ENCODE measurements at regions of chr20 and their contacts with region 1.

Region 1: GRCh38 chr20:31723319-31724078 is 831 bp upstream of the BCL2L1 start:
- DNase-seq: peak; percentile 100
- H3K4me3 ChIP-seq: peak overlapping the region; percentile 75
- H3K4me3 Mint-ChIP-seq: peak overlapping the region; percentile 96
- H3K27ac Mint-ChIP-seq: peak overlapping the region; percentile 97
- H3K4me1 ChIP-seq: peaks cover 12% of the 10 kb centered on the region
- H3K4me1 Mint-ChIP-seq: peaks cover 19% of the 10 kb centered on the region
- H3K27me3 ChIP-seq: no peaks in the 10 kb centered on the region
- H3K27me3 Mint-ChIP-seq: no peaks in the 10 kb centered on the region
- CTCF ChIP-seq: peak; percentile 99 to 100

Region 2: GRCh38 chr20:31514159-31515071 is 209.1 kb before region 1 on chr20 and contains the start of gene HM13:
- CTCF ChIA-PET with region 1: interaction called, 11 read pairs
- POLR2A ChIA-PET with region 1: no interaction called
- intact Hi-C with region 1: no loop called
- DNase-seq: peak; percentile 97 to 98
- H3K4me3 ChIP-seq: peak within 1 kb of the TSS; percentile 74
- H3K4me3 Mint-ChIP-seq: no peak within 1 kb of the TSS
- H3K27ac Mint-ChIP-seq: no peak within 1 kb of the TSS
- H3K4me1 ChIP-seq: peaks cover 22% of the 10 kb centered on the region
- H3K4me1 Mint-ChIP-seq: no peaks in the 10 kb centered on the region
- H3K27me3 ChIP-seq: no peaks in the 10 kb centered on the region
- H3K27me3 Mint-ChIP-seq: no peaks in the 10 kb centered on the region
- CTCF ChIP-seq: peak; percentile 98 to 100
- total RNA-seq, gene HM13: 435 and 443 TPM in 2 replicates

Region 3: DNA sequence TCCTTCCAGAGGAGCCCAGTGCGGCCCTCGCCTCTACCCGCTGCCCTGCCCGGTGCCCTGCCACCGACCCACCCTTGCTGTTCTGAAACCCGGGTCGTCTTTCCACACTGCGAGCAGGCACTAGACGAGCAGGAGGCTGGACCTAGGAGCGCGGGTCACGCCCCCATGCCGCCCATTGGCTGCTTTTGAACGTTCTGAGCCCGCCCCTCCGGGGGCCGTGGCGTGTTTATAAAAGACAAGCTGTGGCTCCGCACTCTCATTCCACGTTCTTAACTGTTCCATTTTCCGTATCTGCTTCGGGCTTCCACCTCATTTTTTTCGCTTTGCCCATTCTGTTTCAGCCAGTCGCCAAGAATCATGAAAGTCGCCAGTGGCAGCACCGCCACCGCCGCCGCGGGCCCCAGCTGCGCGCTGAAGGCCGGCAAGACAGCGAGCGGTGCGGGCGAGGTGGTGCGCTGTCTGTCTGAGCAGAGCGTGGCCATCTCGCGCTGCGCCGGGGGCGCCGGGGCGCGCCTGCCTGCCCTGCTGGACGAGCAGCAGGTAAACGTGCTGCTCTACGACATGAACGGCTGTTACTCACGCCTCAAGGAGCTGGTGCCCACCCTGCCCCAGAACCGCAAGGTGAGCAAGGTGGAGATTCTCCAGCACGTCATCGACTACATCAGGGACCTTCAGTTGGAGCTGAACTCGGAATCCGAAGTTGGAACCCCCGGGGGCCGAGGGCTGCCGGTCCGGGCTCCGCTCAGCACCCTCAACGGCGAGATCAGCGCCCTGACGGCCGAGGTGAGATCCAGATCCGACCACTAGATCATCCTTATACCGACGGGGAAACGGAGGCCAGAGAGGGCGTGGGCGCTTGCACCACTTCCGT is 118.2 kb before region 1 on chr20 and contains the start of gene ID1:
- CTCF ChIA-PET with region 1: interaction called, 58 read pairs
- POLR2A ChIA-PET with region 1: interaction called, 73 read pairs
- intact Hi-C with region 1: loop called (anchors 1 kb)
- DNase-seq: peak; percentile 100
- H3K4me3 ChIP-seq: peak within 1 kb of the TSS; percentile 63
- H3K4me3 Mint-ChIP-seq: peak within 1 kb of the TSS; percentile 88
- H3K27ac Mint-ChIP-seq: peak within 1 kb of the TSS; percentile 98
- H3K4me1 ChIP-seq: peaks cover 54% of the 10 kb centered on the region
- H3K4me1 Mint-ChIP-seq: peaks cover 49% of the 10 kb centered on the region
- H3K27me3 ChIP-seq: no peaks in the 10 kb centered on the region
- H3K27me3 Mint-ChIP-seq: no peaks in the 10 kb centered on the region
- CTCF ChIP-seq: no peak
- total RNA-seq, gene ID1: 157 and 163 TPM in 2 replicates

Region 4: DNA sequence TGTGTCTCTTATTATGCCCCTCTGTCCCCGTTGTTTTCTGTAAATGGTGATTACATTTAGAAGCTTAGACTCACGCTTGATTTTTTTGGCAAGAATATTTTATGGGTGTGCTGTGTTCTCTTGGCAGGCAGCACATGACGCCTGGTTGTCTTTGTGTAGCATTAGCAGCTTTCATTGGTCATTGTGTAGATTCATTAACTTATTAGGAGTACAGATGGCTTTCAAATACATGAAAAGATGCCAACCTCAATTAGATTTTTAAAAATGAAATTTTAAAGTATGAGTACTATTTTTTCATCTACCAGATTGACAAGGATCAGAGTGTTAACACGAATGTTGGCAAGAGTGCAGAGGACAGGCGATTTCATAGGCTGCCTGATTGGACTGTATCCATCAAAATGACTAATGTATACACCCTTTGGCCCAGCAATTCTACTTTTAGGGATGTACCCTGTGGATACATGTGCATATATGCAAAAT is 70.5 kb before region 1 on chr20:
- CTCF ChIA-PET with region 1: interaction called, 20 read pairs
- POLR2A ChIA-PET with region 1: interaction called, 9 read pairs
- intact Hi-C with region 1: no loop called
- DNase-seq: no peak
- H3K4me3 ChIP-seq: no peak overlapping the region
- H3K4me3 Mint-ChIP-seq: no peak overlapping the region
- H3K27ac Mint-ChIP-seq: no peak overlapping the region
- H3K4me1 ChIP-seq: no peaks in the 10 kb centered on the region
- H3K4me1 Mint-ChIP-seq: no peaks in the 10 kb centered on the region
- H3K27me3 ChIP-seq: no peaks in the 10 kb centered on the region
- H3K27me3 Mint-ChIP-seq: no peaks in the 10 kb centered on the region
- CTCF ChIP-seq: no peak

Region 5: DNA sequence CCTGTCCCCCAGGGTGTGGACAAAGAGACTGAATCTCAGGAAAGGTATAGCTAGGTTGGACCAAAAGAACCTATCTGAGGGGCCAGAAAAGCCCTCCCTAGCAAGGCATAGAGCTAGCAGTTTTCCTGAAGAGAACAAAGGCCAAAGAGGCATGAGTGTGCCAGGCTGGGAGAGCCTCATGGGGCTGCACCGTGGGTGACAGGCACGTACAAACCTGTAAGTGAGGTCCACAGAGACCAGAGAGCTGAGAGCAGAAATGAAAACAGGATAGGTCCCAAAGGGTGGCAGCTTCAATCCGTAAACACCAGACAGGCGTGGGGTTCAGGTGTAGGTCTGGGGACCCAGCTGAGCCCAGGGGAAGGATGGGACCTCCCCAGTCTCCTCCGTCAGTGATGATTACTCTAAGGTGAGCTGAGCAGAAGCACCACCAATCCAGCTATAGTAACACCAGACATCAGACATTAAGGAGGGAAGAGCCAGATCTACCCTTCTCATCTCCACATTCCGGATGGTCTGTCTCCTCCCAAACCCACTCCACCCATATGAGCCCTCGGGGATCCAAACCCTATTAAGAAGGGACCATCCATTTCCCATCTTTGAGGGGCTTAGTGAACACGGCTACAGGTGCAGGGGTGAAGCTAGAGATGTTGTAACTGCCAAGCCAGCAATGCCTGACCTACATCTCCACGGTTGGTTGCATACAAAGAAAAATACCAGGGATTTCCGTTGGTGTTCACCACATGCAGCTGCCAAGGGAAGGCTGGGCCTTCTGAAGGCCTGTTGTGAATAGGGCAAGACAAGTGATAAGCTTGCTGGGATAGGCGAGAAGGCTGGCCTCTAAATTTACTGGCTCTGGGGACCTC is 39.1 kb before region 1 on chr20:
- CTCF ChIA-PET with region 1: interaction called, 78 read pairs
- POLR2A ChIA-PET with region 1: interaction called, 45 read pairs
- intact Hi-C with region 1: no loop called
- DNase-seq: no peak
- H3K4me3 ChIP-seq: no peak overlapping the region
- H3K4me3 Mint-ChIP-seq: no peak overlapping the region
- H3K27ac Mint-ChIP-seq: peak overlapping the region; percentile 73
- H3K4me1 ChIP-seq: peaks cover 85% of the 10 kb centered on the region
- H3K4me1 Mint-ChIP-seq: peaks cover 86% of the 10 kb centered on the region
- H3K27me3 ChIP-seq: no peaks in the 10 kb centered on the region
- H3K27me3 Mint-ChIP-seq: no peaks in the 10 kb centered on the region
- CTCF ChIP-seq: no peak

Region 6: DNA sequence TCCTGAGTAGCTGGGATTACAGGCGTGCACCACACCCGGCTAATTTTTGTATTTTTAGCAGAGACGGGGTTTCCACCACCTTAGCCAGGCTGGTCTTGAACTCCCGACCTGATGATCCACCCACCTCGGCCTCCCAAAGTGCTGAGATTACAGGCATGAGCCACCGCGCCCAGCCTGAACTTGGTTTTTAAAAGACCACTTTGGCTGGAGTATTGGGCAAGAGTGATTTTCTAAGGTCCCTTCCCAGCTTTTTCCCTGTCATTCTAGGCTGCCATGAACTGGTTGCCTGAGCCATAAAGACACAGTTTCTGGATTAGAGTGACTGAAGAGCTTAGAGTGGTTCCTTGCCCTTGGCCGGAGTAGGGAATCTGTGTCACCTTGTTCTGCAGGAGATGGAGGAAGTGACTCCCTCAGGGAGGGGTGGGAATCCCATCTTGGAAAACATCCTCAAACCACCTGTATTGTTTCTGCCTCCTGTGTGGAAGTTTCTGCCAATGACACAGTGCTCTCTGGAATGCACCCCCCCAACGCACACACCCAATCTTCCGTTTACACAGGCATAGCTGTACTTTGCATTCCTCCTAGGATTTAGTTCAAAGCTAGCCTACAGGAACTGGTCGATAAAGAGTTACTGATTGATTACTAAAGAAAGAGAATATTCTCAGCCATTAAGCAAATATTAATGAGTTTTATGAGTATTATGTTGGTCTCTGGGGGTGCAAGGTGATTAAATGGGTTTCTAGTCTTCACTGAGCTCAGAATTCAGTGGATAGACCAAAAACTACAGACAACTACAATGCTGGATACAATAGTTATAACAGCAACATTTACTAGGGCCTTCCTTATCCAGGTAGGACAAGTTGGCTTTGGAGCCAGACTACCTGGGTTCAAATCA is 19.0 kb before region 1 on chr20:
- CTCF ChIA-PET with region 1: interaction called, 72 read pairs
- POLR2A ChIA-PET with region 1: interaction called, 178 read pairs
- intact Hi-C with region 1: loop called (anchors 1 kb)
- DNase-seq: peak; percentile 99 to 100
- H3K4me3 ChIP-seq: no peak overlapping the region
- H3K4me3 Mint-ChIP-seq: peak overlapping the region; percentile 48
- H3K27ac Mint-ChIP-seq: peak overlapping the region; percentile 98
- H3K4me1 ChIP-seq: peaks cover 93% of the 10 kb centered on the region
- H3K4me1 Mint-ChIP-seq: peaks cover 74% of the 10 kb centered on the region
- H3K27me3 ChIP-seq: no peaks in the 10 kb centered on the region
- H3K27me3 Mint-ChIP-seq: no peaks in the 10 kb centered on the region
- CTCF ChIP-seq: no peak

Region 7: DNA sequence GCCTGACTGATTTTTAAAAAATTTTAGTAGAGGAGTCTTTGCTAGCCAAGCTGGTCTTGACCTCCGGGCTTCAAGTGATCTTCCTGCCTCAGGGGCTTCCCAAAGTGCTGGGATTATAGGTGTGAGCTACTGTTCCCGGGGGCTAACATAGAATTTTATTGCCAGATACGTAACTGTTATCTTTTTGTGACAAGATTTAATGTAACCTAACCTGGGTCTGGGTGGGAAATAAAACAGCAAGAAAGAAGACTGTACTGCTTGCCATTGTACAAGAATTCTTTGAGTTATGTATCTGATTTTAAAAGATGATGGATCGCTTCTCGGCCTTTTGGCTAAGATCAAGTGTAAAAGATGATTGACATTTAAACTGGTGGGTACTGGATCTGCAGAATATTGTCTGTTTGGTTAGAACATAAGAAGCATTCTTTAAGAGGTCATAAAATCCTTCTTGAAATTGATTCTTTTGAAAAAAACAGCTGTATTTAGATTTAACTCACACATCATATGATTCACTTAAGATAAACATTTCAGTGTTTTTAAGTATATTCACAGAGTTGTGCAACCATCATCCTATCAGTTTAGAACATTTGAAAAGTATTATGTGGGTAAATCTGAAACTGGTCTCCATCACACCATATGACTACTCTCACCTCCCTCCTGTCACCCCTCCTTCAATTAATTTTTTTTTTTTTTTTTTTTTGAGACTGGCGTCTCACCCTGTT is 37.2 kb after region 1 on chr20:
- CTCF ChIA-PET with region 1: interaction called, 3 read pairs
- POLR2A ChIA-PET with region 1: interaction called, 11 read pairs
- intact Hi-C with region 1: no loop called
- DNase-seq: no peak
- H3K4me3 ChIP-seq: no peak overlapping the region
- H3K4me3 Mint-ChIP-seq: no peak overlapping the region
- H3K27ac Mint-ChIP-seq: peak overlapping the region; percentile 32
- H3K4me1 ChIP-seq: peaks cover 19% of the 10 kb centered on the region
- H3K4me1 Mint-ChIP-seq: peaks cover 32% of the 10 kb centered on the region
- H3K27me3 ChIP-seq: no peaks in the 10 kb centered on the region
- H3K27me3 Mint-ChIP-seq: no peaks in the 10 kb centered on the region
- CTCF ChIP-seq: no peak

Region 8: GRCh38 chr20:32077190-32077589 is 353.7 kb after region 1 on chr20:
- CTCF ChIA-PET with region 1: no interaction called
- POLR2A ChIA-PET with region 1: no interaction called
- intact Hi-C with region 1: no loop called
- DNase-seq: no peak
- H3K4me3 ChIP-seq: no peak overlapping the region
- H3K4me3 Mint-ChIP-seq: no peak overlapping the region
- H3K27ac Mint-ChIP-seq: no peak overlapping the region
- H3K4me1 ChIP-seq: no peaks in the 10 kb centered on the region
- H3K4me1 Mint-ChIP-seq: no peaks in the 10 kb centered on the region
- H3K27me3 ChIP-seq: no peaks in the 10 kb centered on the region
- H3K27me3 Mint-ChIP-seq: peaks cover 15% of the 10 kb centered on the region
- CTCF ChIP-seq: no peak

Measured in Caco-2 (cell line).